HEK293 (cell line): ENCODE measurements at regions of chr1 and their contacts with region 1.

Region 1: DNA sequence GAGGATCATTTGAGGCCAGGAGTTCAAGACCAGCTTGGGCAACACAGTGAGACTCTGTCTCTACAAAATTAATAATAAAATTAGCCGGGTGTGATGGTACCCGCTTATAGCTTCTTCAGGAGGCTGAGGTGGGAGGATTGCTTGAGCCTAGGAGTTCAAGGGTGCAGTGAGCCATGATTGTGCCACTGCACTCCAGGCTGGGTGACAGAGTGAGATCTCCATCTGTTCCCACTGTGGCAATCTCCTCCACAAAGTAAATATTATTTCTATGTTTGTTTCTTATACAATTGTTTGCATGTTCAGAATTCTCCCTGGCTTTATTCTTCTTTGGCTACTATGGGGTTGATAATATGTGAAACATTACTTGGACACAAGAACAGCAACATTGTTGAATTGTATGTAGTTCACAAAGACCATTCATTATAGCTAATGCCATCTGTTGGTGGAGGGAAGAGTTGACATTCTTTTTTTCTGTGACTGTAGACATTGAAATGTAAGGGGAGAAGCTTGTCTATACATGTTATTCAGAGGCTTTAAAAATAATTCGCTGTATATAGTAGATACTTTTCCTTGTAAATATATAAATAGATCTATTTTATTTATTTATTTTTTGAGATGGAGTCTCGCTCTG is 47.8 kb upstream of the SRSF10 start:
- H3K4me3 ChIP-seq: no peak overlapping the region
- H3K27ac ChIP-seq: no peak overlapping the region
- H3K4me1 ChIP-seq: no peaks in the 10 kb centered on the region
- CTCF ChIP-seq: 0 out of 2 replicates have a peak, but pooled peaks have one; percentile 30

Region 2: DNA sequence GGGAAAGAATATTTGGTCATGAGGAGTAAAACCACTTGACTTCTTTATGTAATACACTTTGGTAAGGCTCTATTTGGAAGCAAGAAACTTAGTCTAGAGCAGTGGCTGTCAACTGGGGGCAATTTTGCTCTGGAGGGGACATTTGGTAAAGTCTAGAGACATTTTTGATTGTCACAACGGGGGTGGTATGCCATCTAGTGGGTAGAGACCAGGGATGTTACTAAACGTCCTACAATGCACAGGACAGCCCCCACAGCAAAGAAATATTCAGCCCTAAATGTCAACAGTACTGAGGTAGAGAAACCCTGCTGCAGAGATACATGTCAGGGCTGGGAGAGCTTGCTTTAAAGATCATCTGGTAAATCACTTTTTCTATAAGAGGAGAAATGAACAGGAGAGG is 173.4 kb before region 1 on chr1:
- CTCF ChIA-PET with region 1: no interaction called
- POLR2A ChIA-PET with region 1: no interaction called
- H3K4me3 ChIP-seq: no peak overlapping the region
- H3K27ac ChIP-seq: no peak overlapping the region
- H3K4me1 ChIP-seq: no peaks in the 10 kb centered on the region
- CTCF ChIP-seq: peak; percentile 60

Region 3: GRCh38 chr1:24003331-24003972 is 24.5 kb before region 1 on chr1:
- CTCF ChIA-PET with region 1: interaction called, 11 read pairs
- POLR2A ChIA-PET with region 1: no interaction called
- H3K4me3 ChIP-seq: no peak overlapping the region
- H3K27ac ChIP-seq: peak overlapping the region; percentile 18; the same call in 1 of the 2 replicates
- H3K4me1 ChIP-seq: peaks cover 16% of the 10 kb centered on the region
- CTCF ChIP-seq: no peak

Region 4: DNA sequence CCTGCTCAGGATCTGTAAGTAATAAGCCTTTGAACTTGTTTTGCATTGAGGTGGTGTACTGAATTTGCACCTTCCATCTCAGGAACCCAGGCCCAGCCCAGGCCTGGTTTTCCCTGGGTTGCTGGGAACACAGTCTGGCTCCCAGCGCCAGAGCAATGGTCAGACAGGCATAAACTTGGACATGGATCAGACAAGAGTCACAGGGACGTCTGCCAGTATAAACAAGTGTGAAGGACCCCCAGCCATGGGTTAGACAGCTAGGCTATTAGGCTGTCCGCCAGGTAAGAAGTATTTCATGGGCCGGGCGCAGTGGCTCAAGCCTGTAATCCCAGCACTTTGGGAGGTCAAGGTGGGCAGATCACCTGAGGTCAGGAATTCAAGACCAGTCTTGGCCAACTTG is 153.7 kb after region 1 on chr1:
- CTCF ChIA-PET with region 1: no interaction called
- POLR2A ChIA-PET with region 1: no interaction called
- H3K4me3 ChIP-seq: no peak overlapping the region
- H3K27ac ChIP-seq: no peak overlapping the region
- H3K4me1 ChIP-seq: no peaks in the 10 kb centered on the region; the same call in 1 of the 2 replicates
- CTCF ChIP-seq: no peak